ENCODE measurements at regions of chr17 and their contacts with region 1.

Region 1: DNA sequence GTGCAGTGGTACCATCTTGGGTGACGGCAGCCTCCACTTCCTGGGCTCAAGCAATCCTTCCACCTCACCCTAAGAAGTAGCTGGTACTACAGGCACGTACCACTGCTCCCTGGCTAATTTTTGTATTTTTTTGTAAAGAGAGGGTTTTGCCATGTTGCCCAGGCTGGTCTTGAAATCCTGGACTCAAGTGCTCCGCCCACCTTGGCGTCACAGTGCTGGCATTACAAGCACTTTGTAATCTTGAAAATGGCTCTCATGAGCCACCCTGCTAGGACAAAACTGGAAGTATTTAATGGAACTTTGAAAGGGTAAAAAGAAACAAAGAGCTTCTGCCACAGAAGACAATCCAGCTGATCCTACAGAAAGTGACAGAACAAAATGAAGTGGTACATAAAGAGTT is 9.2 kb downstream of the SUMO2 start:
- DNase-seq: no peak
- ATAC-seq: no peak

Region 2: DNA sequence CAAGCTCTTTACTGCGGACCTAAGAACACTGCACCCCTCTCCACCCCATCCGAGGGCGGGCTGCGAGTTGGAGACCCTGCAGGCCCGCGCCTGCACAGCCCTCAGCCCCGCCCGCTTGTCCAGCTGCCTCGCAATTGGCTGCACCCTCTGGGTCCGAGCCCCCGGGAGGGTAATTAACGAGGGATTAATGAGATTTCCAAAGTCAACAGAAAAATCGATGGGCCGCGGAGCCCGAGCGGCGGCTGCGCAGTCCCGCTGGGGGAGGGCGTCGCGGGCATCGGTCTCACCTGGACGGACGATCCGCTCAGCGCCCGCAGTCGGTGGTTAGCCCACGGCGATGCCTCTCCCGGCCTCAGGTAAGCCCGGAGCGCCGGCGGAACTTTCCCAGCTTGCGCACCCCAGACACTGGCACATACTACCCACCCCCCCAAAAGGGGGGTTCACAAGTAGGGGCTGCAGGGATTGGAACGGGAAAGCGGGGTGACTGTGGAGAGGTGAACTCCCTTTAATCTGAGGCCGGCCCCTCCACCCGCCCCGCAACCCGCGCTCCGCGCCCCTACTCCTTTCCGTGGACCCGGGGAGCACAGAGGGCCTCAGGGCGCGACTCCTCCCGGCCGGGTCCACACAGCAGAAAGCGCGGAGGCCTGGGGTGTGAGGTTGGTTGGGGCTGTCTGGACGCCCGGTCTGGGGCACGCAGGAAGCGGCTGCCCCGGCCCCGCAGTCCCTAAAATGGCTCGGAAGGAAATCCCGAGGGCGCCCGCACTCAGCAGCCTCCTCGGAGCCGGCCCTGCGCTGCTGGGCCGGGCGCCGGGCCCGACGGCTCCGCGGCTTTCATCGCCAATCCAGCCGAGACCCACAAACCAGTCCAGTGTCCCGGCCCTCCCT is 237.7 kb before region 1 on chr17 and contains the start of gene OTOP3:
- intact Hi-C with region 1: no loop called
- DNase-seq: no peak
- ATAC-seq: no peak
- total RNA-seq, gene OTOP3: not detected

Region 3: DNA sequence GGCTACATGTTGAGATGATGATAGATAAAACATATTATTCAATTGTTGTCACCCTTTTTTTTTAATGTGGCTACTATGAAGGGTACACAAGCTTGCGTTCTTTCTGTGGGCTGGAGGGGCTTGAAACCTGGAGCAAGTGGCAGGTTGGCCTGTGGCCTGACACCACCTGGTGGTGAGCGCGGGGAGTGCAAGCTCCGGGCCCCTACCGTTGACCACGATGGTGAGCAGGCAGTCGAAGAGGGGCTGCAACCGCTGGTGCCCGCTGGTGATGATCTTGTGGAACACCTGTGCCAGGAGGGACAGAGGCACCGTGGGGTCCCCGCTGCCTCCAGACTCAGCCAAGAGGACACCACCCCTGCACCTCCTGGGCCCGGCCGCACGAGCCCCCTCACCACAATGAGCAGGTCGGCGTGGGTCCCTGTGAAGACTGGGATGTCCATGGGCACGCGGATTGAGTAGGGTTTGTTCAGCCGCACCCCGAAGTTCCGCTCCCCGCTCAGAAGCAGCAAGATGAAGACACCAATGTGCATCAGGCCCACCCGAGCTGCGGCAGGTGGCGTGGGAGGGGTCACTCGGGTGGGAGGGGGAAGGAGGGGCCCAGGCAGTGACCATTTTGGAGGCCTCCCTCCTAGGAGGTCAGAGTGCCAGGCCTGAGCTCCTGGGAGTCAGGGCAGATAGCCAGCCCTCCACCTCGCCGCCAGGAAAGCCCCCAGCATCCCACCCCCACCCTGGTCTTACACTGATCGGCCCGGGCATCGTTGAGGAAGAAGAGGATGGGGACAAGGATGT is 215.4 kb before region 1 on chr17:
- intact Hi-C with region 1: no loop called
- DNase-seq: peak; percentile 76
- ATAC-seq: peak; percentile 35 to 61

Region 4: GRCh38 chr17:75059369-75060345 is 113.9 kb before region 1 on chr17:
- intact Hi-C with region 1: loop called in 1 of 2 experiments (anchors 10 kb)
- DNase-seq: no peak
- ATAC-seq: peak; percentile 82 to 85

Region 5: DNA sequence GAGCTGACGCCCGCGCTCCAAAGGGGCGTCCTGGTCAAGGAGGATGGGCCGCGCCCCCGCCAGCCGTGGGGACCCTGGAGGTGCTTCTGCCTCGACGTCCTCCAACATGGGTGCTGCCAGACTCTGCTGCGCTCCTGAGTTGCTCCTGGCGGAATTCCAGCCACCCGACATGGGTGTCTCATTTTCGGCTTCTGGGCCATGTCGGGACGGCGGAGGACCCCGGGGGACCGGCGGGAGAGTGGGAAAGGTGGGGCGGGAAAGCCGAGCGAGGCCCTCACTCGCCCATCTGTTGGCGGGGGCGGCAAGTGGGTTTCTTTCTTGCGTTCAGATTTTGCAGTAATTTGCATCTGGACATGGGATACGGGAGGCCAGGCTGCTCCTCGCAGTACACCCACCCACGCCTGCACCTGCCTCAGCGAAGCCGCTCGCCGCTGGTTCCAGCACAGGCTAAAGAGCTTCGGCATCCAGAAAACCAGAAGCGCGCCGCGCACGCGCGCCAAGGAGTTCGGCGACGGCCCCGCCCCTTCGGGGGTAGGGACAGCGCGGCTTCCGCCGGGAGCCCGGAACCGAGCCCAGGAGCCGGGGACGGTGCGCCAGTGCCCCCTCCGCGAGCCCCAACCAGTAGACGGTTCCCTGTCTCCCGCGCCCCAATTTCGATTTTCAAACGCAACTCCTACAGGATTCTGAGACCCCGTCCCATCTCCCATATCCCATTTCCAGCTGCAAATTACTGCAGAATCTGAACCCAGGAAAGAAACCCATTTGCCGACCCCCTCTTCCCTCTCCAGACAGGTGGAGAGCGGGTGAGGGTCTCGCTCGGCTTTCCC is 63.9 kb before region 1 on chr17 and contains the start of gene ARMC7:
- intact Hi-C with region 1: loop called (anchors 10 kb)
- DNase-seq: peak; percentile 88
- ATAC-seq: peak; percentile 88 to 90
- total RNA-seq, gene ARMC7: 5.8 to 6.7 TPM

Region 6: GRCh38 chr17:76232342-76232741 is 1058.8 kb after region 1 on chr17:
- intact Hi-C with region 1: no loop called
- DNase-seq: no peak
- ATAC-seq: no peak

Measured in left cardiac atrium (tissue), 4 donors.